Head of caudate nucleus (tissue), 42 donors: ENCODE measurements at regions of chr10 and their contacts with region 1.

Region 1: DNA sequence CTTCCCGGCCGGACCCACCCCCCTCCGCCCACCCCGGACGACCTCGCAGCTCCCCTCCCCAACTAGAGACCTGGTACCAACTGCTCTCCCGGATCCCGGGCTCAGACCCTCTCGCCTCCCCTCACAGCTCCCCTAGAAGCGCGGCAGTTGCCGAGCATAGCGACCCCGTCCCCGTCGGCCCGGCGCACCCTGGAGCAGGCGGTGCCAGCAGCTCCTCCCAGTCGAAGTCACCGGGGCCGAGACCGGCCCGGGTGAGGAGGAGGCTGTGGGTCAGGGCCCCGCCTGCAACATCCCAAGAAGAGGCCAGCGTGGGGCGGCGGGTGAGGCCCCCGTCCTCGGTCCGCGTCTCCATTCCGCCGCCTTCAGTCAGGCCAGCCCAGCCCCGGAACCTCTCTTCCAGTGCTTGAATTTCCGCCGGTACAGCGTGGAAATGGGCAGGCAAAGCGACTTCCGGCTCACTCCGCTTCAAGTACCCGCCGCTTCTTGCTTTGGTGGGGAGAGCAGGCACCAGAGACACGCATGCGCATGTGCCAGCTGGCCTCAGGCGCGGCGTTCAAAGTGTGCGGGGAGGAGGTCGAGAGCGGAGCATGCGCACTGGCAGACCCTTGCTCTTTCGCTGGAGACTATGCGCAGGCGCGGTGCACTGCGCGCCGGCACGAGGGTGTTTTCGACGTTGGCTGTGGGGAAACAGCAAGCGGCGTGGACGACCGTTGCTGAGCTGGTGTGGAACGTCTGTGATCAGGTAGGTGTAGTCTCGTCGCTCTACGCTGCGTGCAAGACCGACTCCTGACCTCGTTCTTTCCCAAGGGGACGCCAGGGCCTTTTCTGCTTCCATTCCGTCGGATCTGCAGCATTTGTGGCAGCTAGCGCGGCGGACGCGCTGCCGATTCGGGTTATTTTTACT is at the start of gene C10orf88:
- DNase-seq: peak; percentile 94 to 99 (median 97)

Region 2: DNA sequence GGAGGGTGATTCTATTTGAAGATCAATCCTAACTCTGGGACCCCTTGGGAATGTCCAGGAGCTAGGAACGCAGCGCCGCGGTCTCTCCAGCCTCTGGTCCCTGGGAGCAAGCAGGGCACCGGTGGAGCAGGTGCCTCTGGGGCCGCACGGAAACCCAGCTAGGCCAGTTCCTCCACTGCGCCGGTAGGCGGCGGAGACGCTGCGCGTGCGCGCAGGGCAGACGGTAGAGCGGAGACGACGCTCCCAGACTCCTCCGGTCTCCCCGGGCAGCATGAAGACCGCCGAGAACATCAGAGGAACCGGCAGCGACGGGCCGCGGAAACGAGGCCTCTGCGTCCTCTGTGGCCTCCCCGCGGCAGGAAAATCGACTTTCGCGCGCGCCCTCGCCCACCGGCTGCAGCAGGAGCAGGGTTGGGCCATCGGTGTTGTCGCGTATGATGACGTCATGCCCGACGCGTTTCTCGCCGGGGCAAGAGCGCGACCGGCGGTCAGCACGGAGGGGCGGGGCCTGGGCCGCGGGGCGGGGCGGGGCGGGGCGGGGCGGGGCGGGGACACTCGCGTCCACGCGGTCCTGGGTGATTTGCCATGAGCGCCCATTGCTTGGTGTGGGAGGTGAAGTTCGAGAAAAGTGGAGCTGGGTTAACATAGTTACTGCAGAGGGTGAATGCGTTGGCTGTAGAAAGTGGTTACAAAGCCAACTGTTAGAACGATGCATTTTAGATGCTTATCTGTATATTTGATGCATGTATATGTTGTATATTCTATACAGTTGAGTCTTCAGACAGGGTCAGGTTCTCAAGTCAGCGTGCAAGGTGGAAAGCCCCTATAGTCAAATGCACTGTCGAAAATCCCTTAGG is 26.4 kb after region 1 on chr10 and contains the start of gene PSTK:
- intact Hi-C with region 1: loop called (anchors 1 kb)
- DNase-seq: peak; percentile 77 to 95 (median 90)